AG04449 (cell line): ENCODE measurements at regions of chr3 and their contacts with region 1.

Region 1: DNA sequence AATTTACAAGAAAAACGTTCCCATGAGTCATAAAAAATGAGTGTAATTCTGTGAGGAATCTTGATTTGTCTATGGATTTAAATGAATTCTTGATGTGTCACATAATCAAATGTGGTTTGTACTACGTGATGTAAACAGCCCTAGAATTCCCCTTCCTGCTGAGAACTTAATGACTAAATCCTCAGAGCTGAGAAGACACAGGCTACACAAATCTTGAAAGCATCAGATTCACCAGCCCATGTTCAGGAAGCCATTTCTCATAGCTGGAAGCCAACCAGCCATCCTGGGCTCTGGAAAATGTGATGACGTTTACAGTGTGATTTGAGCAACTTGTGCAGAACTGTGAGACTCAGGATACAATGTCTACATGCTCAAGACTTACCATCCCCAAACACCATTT is 193.7 kb upstream of the MME start:
- DNase-seq: peak; percentile 100
- H3K4me3 ChIP-seq: no peak overlapping the region
- CTCF ChIP-seq: no peak

Region 2: GRCh38 chr3:154904328-154904727 is 17.9 kb after region 1 on chr3:
- CTCF ChIA-PET with region 1: interaction called, 11 read pairs
- POLR2A ChIA-PET with region 1: no interaction called
- DNase-seq: no peak
- H3K4me3 ChIP-seq: no peak overlapping the region
- CTCF ChIP-seq: peak; percentile 22